ENCODE measurements at regions of chr17 and their contacts with region 1.

Region 1: DNA sequence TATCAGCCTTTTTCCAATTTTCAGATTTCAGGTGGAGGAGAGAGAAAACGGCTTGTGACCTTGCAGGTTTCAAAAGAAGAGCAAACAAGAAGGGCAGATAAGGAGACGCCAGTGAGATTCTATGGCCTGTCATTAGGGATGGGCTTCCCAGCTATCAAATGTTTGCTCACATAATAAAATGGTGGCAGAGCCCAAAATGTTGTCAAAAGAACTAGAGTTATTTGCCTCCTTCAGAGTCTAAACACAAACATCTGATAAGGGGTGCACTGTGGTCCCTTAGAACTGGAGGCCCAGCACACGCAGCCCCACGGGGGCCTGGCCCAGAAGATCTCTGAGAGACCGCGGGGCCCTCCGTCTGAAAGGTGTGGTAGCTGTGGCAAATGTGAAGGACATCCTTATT is 46.1 kb upstream of the DDX52 start:
- DNase-seq: no peak
- H3K4me3 ChIP-seq: no peak overlapping the region
- H3K27ac ChIP-seq: no peak overlapping the region
- H3K4me1 ChIP-seq: no peaks in the 10 kb centered on the region
- H3K27me3 ChIP-seq: no peaks in the 10 kb centered on the region
- CTCF ChIP-seq: no peak

Region 2: DNA sequence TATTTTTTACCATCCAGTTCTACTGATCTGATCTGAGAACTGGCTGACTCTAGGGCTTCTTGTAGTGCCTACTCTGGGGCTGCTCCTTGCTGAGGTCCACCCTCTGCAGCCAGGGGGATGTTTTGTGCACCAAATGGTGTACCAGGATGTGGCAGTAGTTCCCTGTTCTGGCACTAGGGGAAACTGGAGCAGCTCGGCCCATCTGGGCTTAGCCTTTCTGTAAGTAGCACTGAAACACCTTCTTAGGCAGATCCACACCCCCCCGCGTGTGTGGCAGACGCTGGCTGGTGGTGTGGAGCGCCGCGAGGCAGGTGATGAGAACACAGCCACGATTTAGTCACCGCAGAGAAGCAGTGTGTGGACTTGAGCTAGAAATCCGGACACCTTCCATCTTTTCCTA is 182.6 kb before region 1 on chr17:
- CTCF ChIA-PET with region 1: no interaction called
- POLR2A ChIA-PET with region 1: interaction called, 11 read pairs
- intact Hi-C with region 1: no loop called
- DNase-seq: peak; percentile 36
- H3K4me3 ChIP-seq: no peak overlapping the region
- H3K27ac ChIP-seq: no peak overlapping the region
- H3K4me1 ChIP-seq: no peaks in the 10 kb centered on the region
- H3K27me3 ChIP-seq: no peaks in the 10 kb centered on the region
- CTCF ChIP-seq: peak; percentile 36

Measured in A673 (cell line).